Right ventricle myocardium superior (tissue), 1 donor: ENCODE measurements at regions of chr3 and their contacts with region 1.

Region 1: GRCh38 chr3:13091898-13092611 is 18.8 kb upstream of the IQSEC1 start:
- DNase-seq: peak; percentile 92
- ATAC-seq: peak; percentile 89

Region 2: GRCh38 chr3:12901623-12902045 is 190.4 kb before region 1 on chr3:
- intact Hi-C with region 1: no loop called
- DNase-seq: peak; percentile 40
- ATAC-seq: no peak

Region 3: GRCh38 chr3:12994607-12995388 is 97.3 kb before region 1 on chr3:
- intact Hi-C with region 1: no loop called
- DNase-seq: peak; percentile 93
- ATAC-seq: peak; percentile 80

Region 4: GRCh38 chr3:13161024-13161759 is 69.1 kb after region 1 on chr3:
- intact Hi-C with region 1: no loop called
- DNase-seq: no peak
- ATAC-seq: no peak

Region 5: DNA sequence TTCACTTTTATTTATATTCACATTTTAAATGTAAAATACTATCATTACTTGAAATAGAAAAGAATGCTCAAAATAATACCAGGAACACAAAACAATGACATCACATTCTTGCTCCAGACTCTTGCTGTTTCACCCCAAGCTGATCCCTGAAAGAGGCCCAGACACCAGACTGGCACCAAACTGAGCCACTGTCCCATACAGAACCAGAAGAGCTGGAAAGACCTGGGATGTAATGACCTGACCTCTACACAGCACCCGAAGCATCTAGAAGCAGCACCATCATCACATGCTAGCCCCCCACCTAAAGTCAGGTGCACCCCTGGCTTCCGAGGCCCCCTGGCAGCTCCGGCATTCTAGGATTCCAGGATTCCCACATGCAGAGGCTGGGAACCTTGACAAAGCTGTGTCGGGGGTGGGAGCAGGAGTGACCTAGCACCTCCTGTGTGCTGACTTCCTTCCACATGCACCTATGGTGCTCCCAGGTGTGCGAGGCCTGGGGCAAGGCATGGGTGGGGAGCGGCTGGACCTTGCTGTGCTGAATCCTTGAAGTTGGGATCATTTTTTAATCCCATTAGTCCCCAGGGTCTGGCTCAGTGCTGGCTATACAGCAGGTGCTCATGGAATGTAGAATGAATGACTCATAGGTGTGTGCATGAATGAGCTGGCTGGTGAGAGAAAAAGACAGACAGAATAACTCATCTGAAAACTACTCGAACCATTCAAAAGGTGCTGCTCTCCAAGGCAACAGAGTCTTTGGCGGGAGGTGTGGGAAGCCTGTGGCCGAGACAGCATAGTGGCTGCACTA is 125.9 kb after region 1 on chr3:
- intact Hi-C with region 1: no loop called
- DNase-seq: peak; percentile 6
- ATAC-seq: no peak

Region 6: DNA sequence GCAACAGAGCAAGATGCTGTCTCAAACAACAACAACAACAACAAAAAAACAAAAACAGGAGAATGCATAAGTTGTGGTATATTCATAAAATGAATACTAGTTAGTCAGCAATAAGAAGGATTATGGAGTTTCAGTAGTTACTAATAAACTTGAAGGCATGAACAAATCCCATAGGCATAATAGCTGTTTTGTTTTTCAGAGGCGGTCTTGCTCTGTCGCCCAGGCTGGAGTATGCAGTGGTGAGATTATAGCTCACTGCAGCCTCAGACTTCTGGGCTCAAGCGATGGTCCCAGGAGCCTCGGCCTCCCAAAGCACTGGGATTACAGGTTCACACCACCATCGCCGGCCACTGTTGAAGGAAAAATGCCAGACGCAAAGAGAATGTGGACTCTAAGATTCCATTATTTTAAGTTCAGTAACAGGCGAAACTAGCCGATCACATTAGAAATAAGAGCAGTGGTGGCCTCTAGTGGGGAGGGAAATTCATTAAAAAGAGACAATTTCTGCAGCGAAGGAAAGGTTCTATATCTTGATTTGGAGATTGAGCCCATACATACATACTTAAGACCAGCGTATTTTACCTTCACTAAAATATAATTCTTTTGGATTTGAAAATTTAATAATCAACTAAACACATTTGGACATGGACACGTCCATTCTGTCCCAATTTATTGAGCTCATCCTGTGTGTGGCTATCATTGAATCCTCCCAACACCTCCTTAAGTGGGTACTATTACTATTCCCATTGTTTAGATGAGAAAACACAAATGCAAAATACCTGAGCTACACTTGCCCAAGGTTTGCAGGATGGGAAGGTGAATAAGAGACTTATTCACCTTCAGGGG is 360.7 kb after region 1 on chr3:
- intact Hi-C with region 1: loop called (anchors 5 kb)
- DNase-seq: no peak
- ATAC-seq: peak; percentile 67

Region 7: DNA sequence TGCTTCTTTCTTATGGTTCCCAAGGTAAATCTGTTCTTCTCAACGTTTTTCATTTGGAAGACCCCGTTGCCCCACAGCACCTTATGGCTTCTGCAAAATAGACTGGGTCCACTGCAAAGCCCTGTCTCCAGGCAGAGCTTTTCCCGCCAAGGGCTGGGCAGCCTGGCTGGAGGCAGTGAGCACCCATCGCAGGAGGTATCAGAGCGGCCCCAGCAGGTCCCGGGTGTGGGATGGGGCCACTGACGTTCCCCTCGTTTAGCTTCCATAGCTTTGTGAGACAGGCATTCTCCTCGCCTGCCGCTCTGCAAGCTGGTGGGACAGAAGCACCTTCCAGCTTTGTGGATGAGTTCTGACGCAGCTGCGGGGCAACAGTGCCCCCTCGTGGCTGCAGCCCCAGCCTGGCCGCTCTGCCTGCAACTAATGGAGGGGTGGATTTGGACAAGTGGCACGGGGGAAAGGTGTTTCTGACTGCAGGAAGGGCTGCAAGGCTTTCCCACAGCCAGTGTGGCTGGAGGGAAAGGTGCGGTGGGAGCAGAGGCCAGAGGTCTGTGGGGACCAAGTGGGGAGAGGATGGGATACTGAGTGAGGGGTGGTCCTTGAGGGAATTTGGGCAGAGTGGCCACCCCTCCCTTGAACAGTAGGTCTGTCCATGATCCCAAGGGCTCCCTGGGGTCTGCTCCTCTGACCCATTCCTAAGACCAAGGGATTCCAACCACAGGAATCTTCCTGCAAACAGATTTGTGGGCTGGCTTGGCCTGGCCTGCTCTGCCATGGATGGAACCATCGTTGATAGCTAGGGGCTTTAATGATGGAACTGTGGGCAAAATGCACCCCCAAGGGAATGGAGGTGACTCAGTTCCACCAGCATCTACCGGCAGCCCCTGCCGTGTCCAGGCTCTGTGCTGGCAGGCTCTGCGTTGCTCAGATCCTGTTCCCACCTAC is 556.3 kb after region 1 on chr3:
- intact Hi-C with region 1: loop called (anchors 5 kb)
- DNase-seq: peak; percentile 91
- ATAC-seq: peak; percentile 93